ENCODE measurements at regions of chr17 and their contacts with region 1.

Region 1: GRCh38 chr17:29019475-29020181 is 13.8 kb upstream of the SEZ6 start:
- DNase-seq: peak in 1 of 3 donors; percentile 21
- H3K4me3 ChIP-seq: peak overlapping the region in 5 of 7 experiments; percentile 4 to 64 (median 31)
- H3K27ac ChIP-seq: no peak overlapping the region
- H3K4me1 ChIP-seq: peaks cover 4 to 28% (median 27%) of the 10 kb centered on the region in 4 experiments
- H3K27me3 ChIP-seq: peaks cover 0 to 36% (median 21%) of the 10 kb centered on the region in 5 experiments

Region 2: DNA sequence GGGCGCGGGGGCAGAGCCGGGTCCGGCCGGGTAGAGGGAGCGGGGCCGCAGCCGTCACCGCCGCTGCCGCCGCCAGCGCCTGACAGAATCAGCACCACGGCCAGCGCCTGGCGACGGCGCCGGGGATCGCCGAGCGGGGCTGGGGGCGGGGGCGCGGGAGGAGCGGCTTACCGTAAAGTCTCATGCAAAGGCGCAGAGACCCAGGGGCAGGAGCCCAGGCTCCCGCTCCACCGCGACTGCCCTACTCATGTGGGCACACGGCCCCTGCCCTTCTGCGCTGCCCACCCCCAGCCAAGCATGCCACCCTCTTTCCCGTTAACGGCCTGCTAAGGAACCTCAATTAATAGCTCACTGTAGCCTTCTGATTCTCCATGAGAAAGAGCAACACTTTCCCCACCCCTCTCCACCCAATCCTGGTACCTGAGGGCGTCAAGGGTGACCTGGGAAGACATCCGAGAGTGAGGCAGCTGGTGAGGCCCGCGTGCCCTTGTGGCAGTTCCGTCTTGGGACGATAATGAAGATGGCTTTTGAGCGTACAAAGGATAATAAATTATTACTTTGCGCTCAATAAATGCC is 13.6 kb before region 1 on chr17 and contains the start of gene SEZ6:
- CTCF ChIA-PET with region 1: interaction called, 17 read pairs
- POLR2A ChIA-PET with region 1: no interaction called
- DNase-seq: peak; percentile 49 to 82 (median 80)
- H3K4me3 ChIP-seq: peak within 1 kb of the TSS in 1 of 7 experiments; percentile 11
- H3K27ac ChIP-seq: no peak within 1 kb of the TSS
- H3K4me1 ChIP-seq: peaks cover 0 to 2% (median 1%) of the 10 kb centered on the region in 4 experiments
- H3K27me3 ChIP-seq: peaks cover 9 to 74% (median 30%) of the 10 kb centered on the region in 5 experiments